Gastrocnemius medialis (tissue), 4 donors: ENCODE measurements at regions of chr5 and their contacts with region 1.

Region 1: GRCh38 chr5:7445068-7445467 is 49.1 kb downstream of the ADCY2 start:
- DNase-seq: no peak
- ATAC-seq: peak; percentile 39 to 74
- H3K4me3 ChIP-seq: no peak overlapping the region
- H3K27ac ChIP-seq: peak overlapping the region in 3 of 4 donors; percentile 15 to 45 (median 43)
- H3K4me1 ChIP-seq: peaks cover 12 to 20% of the 10 kb centered on the region in 2 donors
- H3K27me3 ChIP-seq: no peaks in the 10 kb centered on the region
- CTCF ChIP-seq: no peak
- POLR2A ChIP-seq: no peak

Region 2: DNA sequence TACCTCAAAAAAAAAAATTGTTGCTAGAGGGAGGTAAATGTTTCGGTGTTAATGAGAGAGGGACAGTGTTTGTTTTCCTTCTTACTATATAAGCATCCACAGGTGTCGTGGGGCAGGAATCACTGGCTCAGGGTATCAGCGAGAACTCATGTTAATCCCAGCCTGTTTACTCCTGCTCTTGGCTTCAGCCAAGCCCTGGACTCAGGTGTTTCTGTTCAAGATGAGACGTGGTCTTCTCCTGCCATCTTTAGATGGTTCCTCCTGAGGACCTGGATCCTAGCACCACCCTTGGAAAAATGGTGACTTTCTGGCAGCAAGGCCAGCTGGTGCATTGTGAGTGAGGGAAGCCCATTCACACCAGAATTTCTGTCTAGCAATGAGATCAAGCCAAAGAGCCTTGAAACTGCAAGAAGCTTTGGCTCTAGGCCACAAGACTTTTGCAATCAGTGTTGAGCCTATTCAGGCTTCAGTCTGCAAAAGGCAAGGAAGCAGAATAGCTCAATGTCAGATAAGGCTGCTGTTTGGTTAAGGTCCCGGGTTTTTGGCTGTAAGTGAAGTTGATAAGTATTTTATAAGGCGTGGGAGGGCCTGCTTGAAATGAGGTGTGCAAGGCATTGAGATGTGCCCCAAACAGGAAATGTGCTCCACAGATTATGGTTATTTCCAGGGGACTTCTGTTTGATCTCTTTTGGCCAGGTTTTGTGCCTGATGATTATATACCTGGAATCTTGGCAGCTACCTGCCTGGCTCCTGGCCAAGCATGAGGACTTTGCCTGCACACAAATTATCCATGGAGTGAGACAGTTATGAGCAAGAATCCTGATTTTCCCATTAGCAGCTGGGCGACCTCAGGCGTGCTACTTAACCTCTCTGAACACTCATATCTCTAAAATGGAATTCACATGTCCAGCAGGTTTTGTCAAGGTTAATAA is 632.0 kb before region 1 on chr5:
- in situ Hi-C with region 1: no loop called
- intact Hi-C with region 1: loop called (anchors 10 kb)
- DNase-seq: no peak
- ATAC-seq: no peak
- H3K4me3 ChIP-seq: no peak overlapping the region
- H3K27ac ChIP-seq: no peak overlapping the region
- H3K4me1 ChIP-seq: peaks cover 4 to 8% of the 10 kb centered on the region in 2 donors
- H3K27me3 ChIP-seq: no peaks in the 10 kb centered on the region
- CTCF ChIP-seq: no peak
- POLR2A ChIP-seq: no peak

Region 3: DNA sequence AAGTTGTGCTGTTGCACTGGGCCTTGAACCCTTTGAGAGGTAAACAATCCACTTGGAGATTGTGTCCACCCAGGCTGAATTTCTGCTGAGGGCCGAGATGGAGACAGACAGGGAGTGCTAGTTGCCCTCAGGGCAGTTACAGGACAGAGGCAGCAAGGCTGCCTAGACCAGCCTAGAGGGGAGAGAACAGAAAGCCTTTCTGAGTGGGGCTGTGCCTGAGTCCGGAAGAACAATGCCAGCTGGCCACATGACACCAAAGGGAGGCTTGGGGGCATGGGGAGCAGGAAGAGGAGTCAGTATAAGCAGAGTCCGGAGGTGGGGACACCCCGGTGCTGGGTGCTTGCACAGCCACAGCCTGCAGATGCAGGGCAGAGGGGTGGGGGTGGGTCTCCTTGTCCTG is 260.2 kb after region 1 on chr5:
- in situ Hi-C with region 1: no loop called
- intact Hi-C with region 1: no loop called
- DNase-seq: no peak
- ATAC-seq: no peak
- H3K4me3 ChIP-seq: no peak overlapping the region
- H3K27ac ChIP-seq: no peak overlapping the region
- H3K4me1 ChIP-seq: peaks cover 4 to 8% of the 10 kb centered on the region in 2 donors
- H3K27me3 ChIP-seq: no peaks in the 10 kb centered on the region
- CTCF ChIP-seq: no peak
- POLR2A ChIP-seq: no peak

Region 4: GRCh38 chr5:7754992-7755596 is 310.0 kb after region 1 on chr5:
- in situ Hi-C with region 1: no loop called
- intact Hi-C with region 1: no loop called
- DNase-seq: peak in 1 of 2 donors; percentile 58
- ATAC-seq: peak in 1 of 2 donors; percentile 37
- H3K4me3 ChIP-seq: no peak overlapping the region
- H3K27ac ChIP-seq: peak overlapping the region; percentile 67 to 84 (median 76)
- H3K4me1 ChIP-seq: peaks cover 10 to 41% of the 10 kb centered on the region in 2 donors
- H3K27me3 ChIP-seq: no peaks in the 10 kb centered on the region
- CTCF ChIP-seq: peak; percentile 31 to 58 (median 39)
- POLR2A ChIP-seq: no peak